ENCODE measurements at regions of chr14 and their contacts with region 1.

Region 1: GRCh38 chr14:44961604-44962333 is at the starts of genes KLHL28 and TOGARAM1:
- H3K4me3 ChIP-seq: peak within 1 kb of the TSS; percentile 91
- H3K27ac ChIP-seq: peak within 1 kb of the TSS; percentile 79
- H3K4me1 ChIP-seq: peaks cover 25% of the 10 kb centered on the region
- CTCF ChIP-seq: no peak

Region 2: GRCh38 chr14:44897045-44897844 is 64.5 kb before region 1 on chr14:
- CTCF ChIA-PET with region 1: no interaction called
- POLR2A ChIA-PET with region 1: interaction called, 23 read pairs
- H3K4me3 ChIP-seq: peak overlapping the region; percentile 97
- H3K27ac ChIP-seq: peak overlapping the region; percentile 94
- H3K4me1 ChIP-seq: no peaks in the 10 kb centered on the region
- CTCF ChIP-seq: no peak

Region 3: DNA sequence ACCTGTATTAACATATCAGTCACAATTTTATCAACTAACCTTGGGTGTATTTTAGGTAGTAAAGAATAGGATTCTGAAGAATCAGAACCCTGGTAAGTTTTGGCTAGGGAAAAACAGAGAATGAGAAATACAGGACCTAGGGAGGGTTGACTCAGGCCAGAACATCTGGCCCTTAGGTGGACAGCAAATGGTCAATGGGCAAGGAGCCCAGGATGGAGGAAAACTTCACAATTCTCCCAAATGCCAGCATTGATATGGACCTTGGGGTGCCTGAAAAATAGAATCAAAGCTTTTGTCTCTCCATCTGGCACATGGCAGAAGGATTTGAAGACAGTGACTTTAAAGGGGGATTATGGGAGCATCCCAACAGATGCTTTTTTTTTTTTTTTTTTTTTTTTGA is 89.4 kb after region 1 on chr14:
- CTCF ChIA-PET with region 1: no interaction called
- POLR2A ChIA-PET with region 1: no interaction called
- H3K4me3 ChIP-seq: no peak overlapping the region
- H3K27ac ChIP-seq: no peak overlapping the region
- H3K4me1 ChIP-seq: no peaks in the 10 kb centered on the region
- CTCF ChIP-seq: no peak

Region 4: GRCh38 chr14:45083971-45084722 is 122.4 kb after region 1 on chr14 and contains the start of gene PRPF39:
- CTCF ChIA-PET with region 1: interaction called, 3 read pairs
- POLR2A ChIA-PET with region 1: interaction called, 13 read pairs
- H3K4me3 ChIP-seq: peak within 1 kb of the TSS; percentile 82
- H3K27ac ChIP-seq: peak within 1 kb of the TSS; percentile 90
- H3K4me1 ChIP-seq: peaks cover 9% of the 10 kb centered on the region; the same call in 1 of the 2 replicates
- CTCF ChIP-seq: no peak

Region 5: GRCh38 chr14:45134051-45134958 is 172.5 kb after region 1 on chr14 and contains the start of gene FKBP3:
- CTCF ChIA-PET with region 1: interaction called, 3 read pairs
- POLR2A ChIA-PET with region 1: interaction called, 22 read pairs
- H3K4me3 ChIP-seq: peak within 1 kb of the TSS; percentile 97
- H3K27ac ChIP-seq: peak within 1 kb of the TSS; percentile 83
- H3K4me1 ChIP-seq: peaks cover 9% of the 10 kb centered on the region; the same call in 1 of the 2 replicates
- CTCF ChIP-seq: peak; percentile 22; the same call in 1 of the 2 replicates

Region 6: GRCh38 chr14:45253068-45253753 is 291.4 kb after region 1 on chr14 and contains the start of gene MIS18BP1:
- CTCF ChIA-PET with region 1: interaction called, 3 read pairs
- POLR2A ChIA-PET with region 1: interaction called, 14 read pairs
- H3K4me3 ChIP-seq: peak within 1 kb of the TSS; percentile 83
- H3K27ac ChIP-seq: peak within 1 kb of the TSS; percentile 84
- H3K4me1 ChIP-seq: peaks cover 5% of the 10 kb centered on the region; the same call in 1 of the 2 replicates
- CTCF ChIP-seq: peak; percentile 84